ENCODE measurements at regions of chr16 and their contacts with region 1.

Region 1: GRCh38 chr16:4200000-4200780 is 41.7 kb downstream of the SRL start:
- DNase-seq: peak; percentile 70 to 86 (median 83)
- H3K4me3 ChIP-seq: no peak overlapping the region
- H3K27ac ChIP-seq: no peak overlapping the region
- H3K4me1 ChIP-seq: no peaks in the 10 kb centered on the region
- H3K27me3 ChIP-seq: no peaks in the 10 kb centered on the region
- CTCF ChIP-seq: peak; percentile 63 to 92 (median 87)
- POLR2A ChIP-seq: no peak

Region 2: DNA sequence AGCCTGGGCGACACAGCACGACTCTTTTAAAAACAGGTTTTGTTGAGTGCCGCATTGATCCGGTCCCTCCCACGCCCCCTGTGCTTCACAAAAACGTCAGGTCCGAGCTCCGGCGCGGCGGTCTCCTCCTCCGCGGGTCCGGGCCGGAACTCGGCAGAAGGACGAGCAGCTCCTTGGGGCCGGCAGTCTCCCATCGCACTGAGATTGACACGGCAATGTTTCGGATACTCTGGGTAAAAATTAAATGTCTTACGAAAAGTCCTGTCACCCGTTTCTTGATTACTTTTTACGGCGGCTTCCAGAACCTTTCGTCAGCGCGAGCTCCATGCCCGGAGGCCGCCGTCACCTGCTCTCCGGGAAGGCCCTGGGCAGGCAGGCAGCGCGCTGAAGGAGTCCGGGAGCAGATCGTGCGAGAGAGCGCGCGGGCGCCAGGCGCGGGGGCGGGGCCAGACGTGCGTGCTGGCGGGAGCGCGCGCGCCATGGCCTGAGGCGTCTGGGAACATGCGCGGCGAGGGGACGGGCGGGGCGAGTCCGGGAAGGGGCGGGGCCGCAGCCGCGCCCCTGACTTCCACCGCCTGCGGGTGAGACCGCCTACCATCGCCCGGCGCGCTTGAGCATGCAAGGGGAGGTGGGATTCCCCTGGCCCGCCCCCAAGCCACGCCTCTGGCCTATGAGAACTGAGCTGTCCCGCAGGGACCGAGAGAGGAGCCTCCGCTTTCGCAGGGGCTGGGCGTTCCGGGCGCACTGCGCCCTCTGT is 53.4 kb after region 1 on chr16:
- intact Hi-C with region 1: loop called (anchors 5 kb)
- DNase-seq: peak; percentile 100
- H3K4me3 ChIP-seq: peak overlapping the region in 3 of 4 donors; percentile 4 to 65 (median 30)
- H3K27ac ChIP-seq: peak overlapping the region; percentile 88 to 99 (median 94)
- H3K4me1 ChIP-seq: no peaks in the 10 kb centered on the region
- H3K27me3 ChIP-seq: no peaks in the 10 kb centered on the region
- CTCF ChIP-seq: peak in 1 of 6 experiments; percentile 9
- POLR2A ChIP-seq: peak; percentile 86 to 94

Region 3: DNA sequence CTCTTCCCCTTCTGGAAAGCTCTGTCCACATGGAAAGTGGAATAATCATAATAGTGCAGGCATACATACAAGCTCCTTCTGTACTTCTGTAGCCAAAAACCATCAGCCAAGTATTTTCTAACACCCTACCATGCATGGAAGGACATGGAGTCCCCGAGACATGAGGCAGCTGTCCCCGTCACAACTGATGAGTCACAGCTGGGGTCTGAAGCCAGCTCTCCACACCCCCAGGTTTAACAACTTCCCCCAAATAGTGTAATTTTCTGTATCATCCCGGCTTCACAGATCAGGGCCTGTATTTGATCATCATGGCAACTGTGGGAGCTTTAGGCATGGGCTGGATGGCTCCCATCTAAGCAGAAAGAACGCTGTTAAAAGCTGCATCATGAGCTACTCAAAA is 372.5 kb after region 1 on chr16:
- intact Hi-C with region 1: no loop called
- DNase-seq: peak in 3 of 7 donors; percentile 16 to 55 (median 27)
- H3K4me3 ChIP-seq: no peak overlapping the region
- H3K27ac ChIP-seq: no peak overlapping the region
- H3K4me1 ChIP-seq: no peaks in the 10 kb centered on the region
- H3K27me3 ChIP-seq: no peaks in the 10 kb centered on the region
- CTCF ChIP-seq: no peak
- POLR2A ChIP-seq: no peak